Left ventricle myocardium superior (tissue), 1 donor: ENCODE measurements at regions of chr12 and their contacts with region 1.

Region 1: DNA sequence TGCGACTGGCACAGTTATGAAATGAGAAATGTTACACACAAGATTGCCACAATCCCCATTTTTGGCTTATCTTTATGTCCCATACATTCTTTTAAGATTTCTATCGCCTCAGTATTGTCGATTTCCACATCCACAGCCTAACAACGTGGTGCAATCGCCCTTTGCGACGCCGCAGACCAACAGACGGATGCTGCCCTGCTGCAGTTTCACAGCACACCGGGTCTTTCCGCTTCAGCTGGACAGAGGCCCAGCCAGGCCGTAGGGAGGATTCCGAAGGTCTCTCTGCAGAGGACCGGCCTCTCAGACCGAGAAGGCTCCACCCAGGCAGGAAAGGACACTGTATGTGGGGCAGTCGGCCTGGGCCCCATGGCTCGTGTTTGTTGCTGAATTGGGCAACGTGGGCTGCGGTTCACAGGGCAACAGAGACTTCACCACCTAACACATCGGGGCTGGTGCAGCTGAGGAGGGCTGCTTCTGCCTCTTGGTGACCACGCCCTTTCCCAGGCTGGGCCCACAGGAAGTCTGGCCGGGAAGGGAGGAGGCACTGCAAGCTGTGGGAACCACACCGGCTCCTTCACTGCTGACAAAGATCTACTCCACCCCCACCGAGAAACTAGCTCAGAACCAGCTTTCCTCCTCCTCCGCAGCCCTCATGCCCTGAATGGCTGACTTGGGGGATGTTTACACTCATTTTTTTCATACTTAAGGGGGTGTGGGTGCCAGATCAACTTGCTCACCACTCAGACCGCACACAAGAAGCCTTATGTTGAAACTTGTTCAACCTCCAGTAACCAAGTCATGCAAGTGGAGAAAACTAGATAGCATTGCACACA is 32.9 kb upstream of the MDM1 start:
- DNase-seq: peak; percentile 91
- ATAC-seq: peak; percentile 98

Region 2: DNA sequence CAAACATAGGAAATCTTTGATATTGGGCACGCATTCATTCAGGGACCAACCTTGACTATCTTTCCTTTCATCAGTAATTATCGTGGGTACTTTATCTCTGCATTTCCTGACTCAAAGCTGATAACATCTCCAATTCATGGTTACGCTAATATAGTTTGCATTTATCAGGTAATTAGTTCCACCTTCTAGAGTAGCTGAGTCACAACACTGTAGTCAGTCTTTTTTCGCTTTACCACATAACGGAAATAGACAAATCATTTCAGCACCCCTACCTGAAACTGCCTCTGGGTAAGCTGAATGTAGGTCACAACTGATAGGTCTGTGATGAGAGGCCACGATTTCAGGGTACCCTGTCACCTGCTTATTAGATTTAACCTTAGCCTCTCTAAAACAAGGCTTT is 75.0 kb before region 1 on chr12:
- intact Hi-C with region 1: no loop called
- DNase-seq: no peak
- ATAC-seq: no peak

Region 3: GRCh38 chr12:68406134-68406594 is 41.1 kb after region 1 on chr12:
- intact Hi-C with region 1: loop called (anchors 2 kb)
- DNase-seq: peak; percentile 95
- ATAC-seq: peak; percentile 99

Region 4: DNA sequence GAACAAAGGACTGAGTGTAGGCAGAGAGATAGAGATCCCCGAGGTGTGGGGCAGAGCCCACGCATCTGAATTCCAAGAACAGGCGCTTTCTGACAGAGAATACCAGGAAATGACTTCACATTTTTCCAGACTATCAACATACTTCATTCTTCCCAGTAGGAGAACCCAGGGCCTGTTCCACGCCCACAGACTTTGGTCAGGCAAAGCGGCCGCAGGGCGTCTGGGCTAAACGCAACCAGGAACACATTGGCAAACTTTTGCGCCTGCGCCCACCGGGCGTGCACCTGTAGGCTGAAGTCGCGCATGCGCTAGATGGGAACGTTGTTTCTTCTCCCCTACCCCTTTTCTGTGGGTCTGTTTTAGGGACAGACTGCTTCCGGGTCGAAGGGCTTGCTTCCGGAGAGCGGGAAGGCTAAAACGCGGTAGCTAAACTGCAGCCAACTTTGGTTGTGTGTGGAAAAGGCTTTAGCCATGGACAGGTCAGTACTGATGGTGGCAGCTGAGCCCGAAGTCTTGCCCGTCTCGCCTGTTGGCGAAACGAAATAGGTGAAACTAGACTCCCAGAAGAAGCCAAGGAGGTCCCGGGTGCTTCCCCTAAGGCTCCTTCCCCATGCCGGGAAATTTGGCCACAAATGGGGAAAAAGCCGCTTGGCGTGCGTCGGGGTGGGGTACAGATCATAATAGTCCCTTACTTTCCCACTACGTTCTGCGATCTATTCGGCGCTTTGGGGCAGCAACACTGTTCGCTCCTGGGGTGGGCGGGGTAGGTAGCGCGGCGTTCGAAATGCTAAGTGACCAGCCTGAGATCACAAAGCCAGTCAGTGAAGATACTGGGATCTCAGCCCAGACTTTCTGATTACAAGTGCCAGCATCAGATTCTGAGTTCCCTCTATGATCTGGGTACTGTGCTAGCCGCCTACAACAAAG is 321.7 kb after region 1 on chr12 and contains the start of gene NUP107:
- intact Hi-C with region 1: loop called (anchors 10 kb)
- DNase-seq: peak; percentile 99
- ATAC-seq: peak; percentile 99
- total RNA-seq, gene NUP107: 17.2 TPM

Region 5: GRCh38 chr12:69083689-69084088 is 718.6 kb after region 1 on chr12:
- intact Hi-C with region 1: no loop called
- DNase-seq: no peak
- ATAC-seq: no peak